CD4-positive, alpha-beta memory T cell (primary cell): ENCODE measurements at regions of chr17 and their contacts with region 1.

Region 1: DNA sequence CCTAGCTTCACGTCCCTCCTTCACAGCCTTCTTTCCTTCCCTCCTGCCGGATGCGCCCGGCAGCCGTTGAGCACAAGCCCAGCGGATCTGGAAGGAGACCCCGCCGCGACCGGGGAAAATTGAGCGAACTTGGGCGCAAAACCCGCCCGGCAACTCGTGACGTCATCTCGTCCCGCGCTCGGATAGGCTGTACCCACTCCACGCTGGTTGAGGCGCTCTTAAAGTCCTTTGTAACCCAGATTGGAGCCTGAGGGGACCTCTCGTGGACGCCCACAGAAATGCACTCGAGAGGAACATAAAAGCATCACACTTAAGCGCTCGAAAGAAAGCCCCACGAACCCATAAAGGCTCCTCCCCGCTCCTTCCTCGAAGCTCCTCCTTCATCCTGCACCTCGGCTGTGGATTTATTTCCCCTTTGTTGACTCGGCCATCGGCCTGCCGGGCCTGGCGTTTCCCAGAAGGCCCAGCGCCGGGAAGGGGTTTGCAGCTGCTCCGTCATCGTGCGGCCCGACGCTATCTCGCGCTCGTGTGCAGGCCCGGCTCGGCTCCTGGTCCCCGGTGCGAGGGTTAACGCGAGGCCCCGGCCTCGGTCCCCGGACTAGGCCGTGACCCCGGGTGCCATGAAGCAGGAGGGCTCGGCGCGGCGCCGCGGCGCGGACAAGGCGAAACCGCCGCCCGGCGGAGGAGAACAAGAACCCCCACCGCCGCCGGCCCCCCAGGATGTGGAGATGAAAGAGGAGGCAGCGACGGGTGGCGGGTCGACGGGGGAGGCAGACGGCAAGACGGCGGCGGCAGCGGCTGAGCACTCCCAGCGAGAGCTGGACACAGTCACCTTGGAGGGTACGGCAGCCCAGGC is at the start of gene PSMD3:
- DNase-seq: peak; percentile 96 to 99 (median 99)
- H3K4me3 ChIP-seq: peak within 1 kb of the TSS; percentile 79 to 90
- H3K4me3 Mint-ChIP-seq: peak within 1 kb of the TSS; percentile 91 to 98 (median 95)
- H3K27ac ChIP-seq: peak within 1 kb of the TSS; percentile 96
- H3K27ac Mint-ChIP-seq: peak within 1 kb of the TSS; percentile 94 to 98 (median 97)
- H3K4me1 ChIP-seq: peaks cover 34% of the 10 kb centered on the region
- H3K4me1 Mint-ChIP-seq: peaks cover 22 to 45% (median 32%) of the 10 kb centered on the region in 4 donors
- H3K27me3 ChIP-seq: no peaks in the 10 kb centered on the region
- H3K27me3 Mint-ChIP-seq: no peaks in the 10 kb centered on the region
- total RNA-seq, gene PSMD3: 59.7 to 60.3 TPM

Region 2: DNA sequence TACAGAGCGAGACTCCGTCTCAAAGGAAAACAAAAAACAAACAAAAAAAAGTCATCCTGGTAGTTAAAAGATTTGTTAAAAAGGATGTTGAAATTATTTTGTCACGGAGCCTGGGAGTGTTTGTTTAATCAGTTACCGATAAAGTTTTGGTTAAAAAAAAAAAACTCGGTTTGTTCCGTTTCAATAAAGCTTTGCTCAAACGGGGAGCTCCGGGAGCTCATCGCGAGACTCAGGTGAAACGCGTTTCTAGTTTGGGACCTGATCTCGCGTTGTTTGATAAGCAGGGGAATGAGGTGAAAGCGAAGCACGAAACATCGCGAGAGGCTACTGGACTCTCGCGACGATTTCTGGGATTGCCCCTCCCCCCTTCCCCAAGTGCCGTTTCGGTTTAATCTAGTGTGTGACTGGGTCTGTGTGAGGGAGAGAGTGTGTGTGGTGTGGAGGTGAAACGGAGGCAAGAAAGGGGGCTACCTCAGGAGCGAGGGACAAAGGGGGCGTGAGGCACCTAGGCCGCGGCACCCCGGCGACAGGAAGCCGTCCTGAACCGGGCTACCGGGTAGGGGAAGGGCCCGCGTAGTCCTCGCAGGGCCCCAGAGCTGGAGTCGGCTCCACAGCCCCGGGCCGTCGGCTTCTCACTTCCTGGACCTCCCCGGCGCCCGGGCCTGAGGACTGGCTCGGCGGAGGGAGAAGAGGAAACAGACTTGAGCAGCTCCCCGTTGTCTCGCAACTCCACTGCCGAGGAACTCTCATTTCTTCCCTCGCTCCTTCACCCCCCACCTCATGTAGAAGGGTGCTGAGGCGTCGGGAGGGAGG is 519.3 kb before region 1 on chr17 and contains the start of gene CDK12:
- CTCF ChIA-PET with region 1: no interaction called
- POLR2A ChIA-PET with region 1: no interaction called
- intact Hi-C with region 1: loop called (anchors 1 kb)
- DNase-seq: peak; percentile 95 to 98 (median 96)
- H3K4me3 ChIP-seq: peak within 1 kb of the TSS; percentile 67 to 96
- H3K4me3 Mint-ChIP-seq: peak within 1 kb of the TSS; percentile 92 to 98 (median 96)
- H3K27ac ChIP-seq: peak within 1 kb of the TSS; percentile 93
- H3K27ac Mint-ChIP-seq: peak within 1 kb of the TSS; percentile 91 to 99 (median 97)
- H3K4me1 ChIP-seq: peaks cover 40% of the 10 kb centered on the region
- H3K4me1 Mint-ChIP-seq: peaks cover 14 to 57% (median 34%) of the 10 kb centered on the region in 4 donors
- H3K27me3 ChIP-seq: no peaks in the 10 kb centered on the region
- H3K27me3 Mint-ChIP-seq: no peaks in the 10 kb centered on the region
- total RNA-seq, gene CDK12: 107 to 114 TPM

Region 3: DNA sequence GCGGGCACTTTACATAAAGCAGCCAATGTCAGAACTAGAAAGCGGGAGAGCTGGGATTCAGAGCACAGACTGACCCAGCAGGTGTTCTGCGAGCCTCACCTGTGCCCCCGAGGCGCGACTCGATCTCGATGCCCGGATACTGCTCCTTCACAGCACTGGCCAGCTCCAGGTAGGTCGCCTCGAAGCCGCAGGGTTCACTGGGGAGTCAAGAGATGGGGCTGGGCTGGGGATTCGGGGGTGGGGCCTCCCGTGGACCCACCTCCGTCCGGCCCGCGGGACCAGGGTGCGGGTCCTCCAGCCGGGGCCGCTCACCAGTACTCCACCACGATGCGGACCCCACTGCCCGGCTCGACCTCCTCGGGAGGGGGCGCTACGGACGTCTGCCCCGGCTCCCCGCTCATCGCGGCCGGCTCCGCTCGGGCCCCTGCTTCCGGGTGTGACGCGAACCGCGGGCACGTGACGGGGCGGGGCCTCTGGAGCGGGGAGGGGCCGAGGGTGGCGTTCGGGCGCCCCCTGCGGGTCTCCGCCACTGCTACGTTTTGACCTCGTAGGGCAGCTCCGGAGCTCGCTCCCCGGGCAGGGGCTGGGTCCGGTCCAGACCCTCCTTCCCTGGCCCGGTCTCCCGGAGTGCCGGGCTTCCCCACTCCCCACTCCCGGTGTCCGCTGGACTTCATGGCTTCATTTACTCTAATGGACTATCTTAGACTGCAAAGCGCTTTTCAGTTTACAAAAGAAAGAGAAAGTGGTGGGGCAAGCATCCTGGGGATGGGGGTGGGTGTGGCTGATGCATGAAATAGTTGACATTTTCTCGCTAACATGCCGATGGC is 250.3 kb before region 1 on chr17 and contains the start of gene MIEN1:
- CTCF ChIA-PET with region 1: no interaction called
- POLR2A ChIA-PET with region 1: interaction called, 10 read pairs
- intact Hi-C with region 1: loop called (anchors 1 kb)
- DNase-seq: peak; percentile 87 to 97 (median 93)
- H3K4me3 ChIP-seq: peak within 1 kb of the TSS; percentile 92 to 94
- H3K4me3 Mint-ChIP-seq: peak within 1 kb of the TSS; percentile 90 to 94 (median 92)
- H3K27ac ChIP-seq: peak within 1 kb of the TSS; percentile 91
- H3K27ac Mint-ChIP-seq: peak within 1 kb of the TSS; percentile 86 to 95 (median 93)
- H3K4me1 ChIP-seq: peaks cover 22% of the 10 kb centered on the region
- H3K4me1 Mint-ChIP-seq: peaks cover 6 to 33% (median 12%) of the 10 kb centered on the region in 4 donors
- H3K27me3 ChIP-seq: no peaks in the 10 kb centered on the region
- H3K27me3 Mint-ChIP-seq: no peaks in the 10 kb centered on the region
- total RNA-seq, gene MIEN1: 35.8 TPM

Region 4: GRCh38 chr17:39863918-39864746 is 116.4 kb before region 1 on chr17 and contains the start of gene IKZF3:
- CTCF ChIA-PET with region 1: no interaction called
- POLR2A ChIA-PET with region 1: interaction called, 7 read pairs
- intact Hi-C with region 1: loop called (anchors 1 kb)
- DNase-seq: peak; percentile 82 to 90 (median 83)
- H3K4me3 ChIP-seq: peak within 1 kb of the TSS; percentile 55 to 80
- H3K4me3 Mint-ChIP-seq: peak within 1 kb of the TSS; percentile 91 to 97 (median 94)
- H3K27ac ChIP-seq: peak within 1 kb of the TSS; percentile 93
- H3K27ac Mint-ChIP-seq: peak within 1 kb of the TSS; percentile 94 to 99 (median 96)
- H3K4me1 ChIP-seq: peaks cover 68% of the 10 kb centered on the region
- H3K4me1 Mint-ChIP-seq: peaks cover 52 to 93% (median 67%) of the 10 kb centered on the region in 4 donors
- H3K27me3 ChIP-seq: no peaks in the 10 kb centered on the region
- H3K27me3 Mint-ChIP-seq: no peaks in the 10 kb centered on the region
- total RNA-seq, gene IKZF3: 116 to 118 TPM

Region 5: DNA sequence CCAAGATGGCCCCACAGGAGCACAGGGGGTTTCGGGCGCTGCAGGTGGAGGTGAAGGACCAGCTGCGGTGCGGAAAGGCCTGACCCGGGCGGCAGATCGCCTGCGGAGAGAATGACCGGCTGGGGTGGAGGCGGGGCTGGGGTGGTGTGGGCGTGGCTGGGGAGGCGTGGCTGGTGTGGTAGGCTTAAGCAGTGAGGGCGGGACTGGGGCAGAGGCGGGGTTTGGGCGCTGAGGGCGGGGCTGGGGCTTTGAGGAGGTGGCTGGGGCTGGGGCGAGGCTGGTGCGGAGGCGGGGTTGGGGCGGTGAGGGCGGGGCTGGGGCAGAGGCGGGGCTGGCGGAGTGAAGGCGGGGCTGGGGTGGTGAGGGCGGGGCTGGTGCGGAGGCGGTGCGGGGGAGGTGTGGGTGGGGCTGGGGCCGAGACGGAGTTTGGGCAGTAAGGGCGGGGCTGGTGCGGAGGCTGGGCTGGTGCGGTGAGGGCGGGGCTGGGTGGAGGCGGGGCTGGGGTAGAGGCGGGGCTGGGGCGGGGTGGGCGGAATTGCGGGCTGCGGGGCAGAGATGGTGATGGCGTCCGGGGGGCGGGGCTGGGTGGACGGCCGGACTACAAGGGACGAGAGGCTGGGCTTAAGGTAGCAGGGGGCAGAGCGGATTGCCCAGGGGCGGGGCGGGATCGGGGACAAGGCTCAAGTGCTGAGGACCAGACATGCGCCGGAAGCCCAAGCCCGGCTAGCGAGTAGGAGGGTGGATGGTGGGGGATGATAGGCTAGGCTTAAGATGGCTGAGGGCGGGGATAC is 27.7 kb before region 1 on chr17:
- CTCF ChIA-PET with region 1: interaction called, 197 read pairs
- POLR2A ChIA-PET with region 1: interaction called, 52 read pairs
- intact Hi-C with region 1: loop called (anchors 1 kb)
- DNase-seq: peak; percentile 90 to 99 (median 90)
- H3K4me3 ChIP-seq: peak overlapping the region; percentile 61 to 78
- H3K4me3 Mint-ChIP-seq: peak overlapping the region; percentile 79 to 90 (median 86)
- H3K27ac ChIP-seq: peak overlapping the region; percentile 34
- H3K27ac Mint-ChIP-seq: peak overlapping the region; percentile 71 to 94 (median 89)
- H3K4me1 ChIP-seq: peaks cover 12% of the 10 kb centered on the region
- H3K4me1 Mint-ChIP-seq: peaks cover 6 to 23% (median 9%) of the 10 kb centered on the region in 4 donors
- H3K27me3 ChIP-seq: no peaks in the 10 kb centered on the region
- H3K27me3 Mint-ChIP-seq: no peaks in the 10 kb centered on the region

Region 6: DNA sequence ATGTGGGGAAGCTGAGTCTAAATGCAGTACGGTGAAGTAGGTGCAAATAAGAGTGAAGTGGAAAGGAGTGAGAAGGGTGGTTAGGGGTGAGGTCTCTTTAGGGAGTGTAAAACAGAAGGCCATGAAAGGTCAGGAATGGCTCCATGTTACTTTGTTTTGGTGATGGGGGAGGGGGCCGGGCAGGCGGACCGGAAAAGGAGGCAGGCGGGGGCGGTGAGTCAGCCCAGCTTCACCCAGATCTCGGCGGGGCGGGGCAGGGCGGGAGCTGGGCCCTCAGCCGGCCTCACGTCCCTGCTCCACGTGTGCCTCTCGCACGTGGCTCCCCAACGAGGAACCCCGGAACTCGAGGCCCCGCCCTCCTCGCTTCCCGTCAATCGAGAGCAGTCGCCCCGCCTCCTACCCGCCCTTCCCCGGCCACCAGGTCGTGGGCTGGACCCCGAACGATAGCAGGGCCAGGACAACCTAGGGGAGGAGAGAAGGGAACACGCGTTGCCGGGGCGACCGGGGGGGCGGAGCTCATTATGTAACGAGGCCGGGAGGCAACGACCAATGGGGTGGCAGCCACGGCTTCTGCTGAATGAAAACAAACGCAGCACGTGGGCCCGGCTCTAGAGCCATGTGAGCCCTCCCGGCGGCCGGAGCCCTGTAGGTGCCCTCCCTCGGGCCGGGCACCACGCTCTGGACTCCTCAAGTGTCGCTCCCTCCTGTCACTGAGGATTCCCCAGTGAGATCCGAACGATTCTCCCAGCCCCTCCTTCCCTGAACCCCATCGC is 118.5 kb after region 1 on chr17:
- CTCF ChIA-PET with region 1: no interaction called
- POLR2A ChIA-PET with region 1: interaction called, 16 read pairs
- intact Hi-C with region 1: no loop called
- DNase-seq: peak; percentile 98 to 100 (median 99)
- H3K4me3 ChIP-seq: peak overlapping the region; percentile 73 to 96
- H3K4me3 Mint-ChIP-seq: peak overlapping the region; percentile 80 to 99 (median 98)
- H3K27ac ChIP-seq: peak overlapping the region; percentile 92
- H3K27ac Mint-ChIP-seq: peak overlapping the region; percentile 86 to 99 (median 94)
- H3K4me1 ChIP-seq: peaks cover 90% of the 10 kb centered on the region
- H3K4me1 Mint-ChIP-seq: peaks cover 61 to 95% (median 79%) of the 10 kb centered on the region in 4 donors
- H3K27me3 ChIP-seq: no peaks in the 10 kb centered on the region
- H3K27me3 Mint-ChIP-seq: no peaks in the 10 kb centered on the region